Activated CD8-positive, alpha-beta T cell treated with anti-CD3 and anti-CD28 coated beads for 36 hours (primary cell): ENCODE measurements at regions of chr1 and their contacts with region 1.

Region 1: GRCh38 chr1:151106894-151107293 is 36.3 kb downstream of the GABPB2 start:
- DNase-seq: no peak
- ATAC-seq: no peak
- H3K4me3 Mint-ChIP-seq: no peak overlapping the region
- H3K27ac Mint-ChIP-seq: no peak overlapping the region
- H3K4me1 Mint-ChIP-seq: no peaks in the 10 kb centered on the region
- H3K27me3 Mint-ChIP-seq: no peaks in the 10 kb centered on the region
- CTCF ChIP-seq: no peak

Region 2: DNA sequence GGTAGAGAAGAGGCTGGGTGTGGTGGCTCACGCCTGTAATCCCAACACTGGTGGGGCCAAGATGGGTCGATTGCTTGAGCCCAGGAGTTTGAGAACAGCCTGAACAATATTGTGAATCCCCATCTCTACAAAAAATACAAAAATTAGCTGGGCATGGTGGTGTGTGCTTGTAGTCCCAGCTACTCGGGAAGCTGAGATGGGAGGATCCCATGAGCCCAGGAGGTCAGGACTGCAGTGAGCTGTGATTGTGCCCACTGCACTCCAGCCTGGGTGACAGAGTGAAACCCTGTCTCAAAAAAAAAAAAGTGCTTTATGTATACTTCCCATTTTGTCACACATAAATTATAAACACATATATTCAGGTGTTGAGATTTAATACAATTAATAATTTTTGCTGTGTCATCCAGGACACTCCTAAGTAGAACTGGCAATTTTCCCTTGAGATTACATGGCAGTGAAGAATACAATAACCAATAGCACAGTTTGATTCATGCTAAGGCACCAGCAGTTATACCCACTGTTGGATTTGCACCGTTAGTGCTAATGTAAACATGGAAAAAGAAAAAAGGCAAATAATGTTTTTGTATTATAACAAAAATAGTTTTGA is 20.8 kb before region 1 on chr1:
- CTCF ChIA-PET with region 1: interaction called, 12 read pairs
- POLR2A ChIA-PET with region 1: interaction called, 3 read pairs
- intact Hi-C with region 1: no loop called
- DNase-seq: no peak
- ATAC-seq: no peak
- H3K4me3 Mint-ChIP-seq: no peak overlapping the region
- H3K27ac Mint-ChIP-seq: no peak overlapping the region
- H3K4me1 Mint-ChIP-seq: no peaks in the 10 kb centered on the region
- H3K27me3 Mint-ChIP-seq: no peaks in the 10 kb centered on the region
- CTCF ChIP-seq: no peak

Region 3: DNA sequence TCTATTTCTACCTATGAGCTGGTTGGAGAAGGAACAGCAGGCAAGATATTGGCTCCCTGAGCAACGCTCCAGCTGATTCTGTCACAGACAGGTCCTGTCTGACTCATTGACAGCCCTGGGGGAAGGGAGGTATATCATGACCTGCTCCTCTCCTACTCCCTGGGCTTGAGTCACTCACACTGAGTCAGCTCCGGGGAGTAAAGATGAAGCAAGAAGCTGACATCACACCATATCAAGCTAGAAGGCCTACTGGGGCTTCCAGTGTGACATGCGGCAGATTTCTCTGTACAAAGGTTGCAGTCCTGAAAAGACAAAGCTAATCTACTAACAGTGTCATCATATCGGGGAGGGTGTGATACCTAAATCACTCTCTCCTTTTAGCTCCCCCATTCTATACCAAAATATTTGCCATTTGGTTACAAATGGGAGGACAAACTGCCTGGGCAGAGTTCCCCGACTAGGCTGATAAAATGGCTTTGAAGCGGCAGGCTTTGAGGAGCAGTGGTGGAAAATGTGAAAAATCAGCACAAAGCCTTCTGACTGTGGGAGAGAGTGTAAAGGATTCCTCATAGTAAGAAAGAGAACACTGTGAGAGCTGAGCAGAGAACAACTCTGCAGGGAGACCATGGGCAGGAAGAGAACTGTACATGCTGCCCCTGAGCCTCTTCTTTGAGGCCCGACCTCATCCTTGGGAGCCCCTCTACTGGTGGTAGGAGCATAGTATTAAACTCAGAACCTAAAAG is 204.9 kb after region 1 on chr1:
- CTCF ChIA-PET with region 1: no interaction called
- POLR2A ChIA-PET with region 1: no interaction called
- intact Hi-C with region 1: no loop called
- DNase-seq: peak; percentile 93
- ATAC-seq: peak; percentile 100
- H3K4me3 Mint-ChIP-seq: peak overlapping the region; percentile 0
- H3K27ac Mint-ChIP-seq: peak overlapping the region; percentile 97
- H3K4me1 Mint-ChIP-seq: peaks cover 27% of the 10 kb centered on the region
- H3K27me3 Mint-ChIP-seq: no peaks in the 10 kb centered on the region
- CTCF ChIP-seq: no peak

Region 4: GRCh38 chr1:151377150-151377884 is 270.4 kb after region 1 on chr1:
- CTCF ChIA-PET with region 1: no interaction called
- POLR2A ChIA-PET with region 1: no interaction called
- intact Hi-C with region 1: no loop called
- DNase-seq: no peak
- ATAC-seq: no peak
- H3K4me3 Mint-ChIP-seq: no peak overlapping the region
- H3K27ac Mint-ChIP-seq: no peak overlapping the region
- H3K4me1 Mint-ChIP-seq: no peaks in the 10 kb centered on the region
- H3K27me3 Mint-ChIP-seq: no peaks in the 10 kb centered on the region
- CTCF ChIP-seq: no peak